ENCODE measurements at regions of chr5 and their contacts with region 1.

Region 1: DNA sequence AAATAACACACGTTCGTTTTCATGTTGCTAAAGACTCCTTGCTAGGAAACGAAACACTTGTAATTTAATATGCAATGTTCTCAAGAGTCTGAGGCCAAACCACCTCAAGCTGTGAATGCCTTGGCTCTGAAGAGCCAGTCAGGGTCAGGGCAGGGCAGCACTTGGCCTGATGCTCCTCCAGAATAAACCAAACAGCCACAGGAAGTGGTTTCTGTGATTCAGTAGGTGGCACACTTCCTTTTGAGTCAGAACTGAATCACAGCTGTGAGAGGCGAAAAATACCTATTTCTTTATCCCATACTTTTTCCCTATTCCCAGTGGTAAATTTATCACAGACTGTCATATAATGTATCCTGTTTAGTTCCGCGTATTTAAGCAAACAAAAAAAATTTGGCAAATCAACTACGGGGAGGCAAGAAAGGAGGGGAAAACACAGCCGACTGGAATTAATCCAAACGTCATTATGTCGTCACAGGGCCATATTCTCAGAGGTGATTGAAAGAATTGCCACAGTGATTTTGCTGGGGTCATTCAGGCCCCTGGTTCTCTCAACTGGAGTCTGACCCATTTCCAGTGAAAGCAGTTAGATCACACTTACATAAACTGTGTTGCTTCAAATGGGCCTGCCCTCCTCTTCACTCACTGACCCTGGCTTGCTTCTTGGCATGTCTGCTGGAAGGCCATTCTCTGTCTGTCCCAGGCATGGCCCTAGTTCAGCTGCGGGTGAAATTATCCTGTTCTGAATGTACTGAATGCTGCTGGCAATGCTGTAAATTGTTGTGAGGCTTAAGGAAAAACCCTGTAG is 71.2 kb downstream of the ARRDC3 start:
- DNase-seq: peak; percentile 82
- H3K4me3 ChIP-seq: peak overlapping the region; percentile 33
- H3K27ac ChIP-seq: peak overlapping the region; percentile 52
- H3K4me1 ChIP-seq: peaks cover 59% of the 10 kb centered on the region
- CTCF ChIP-seq: peak; percentile 59

Region 2: DNA sequence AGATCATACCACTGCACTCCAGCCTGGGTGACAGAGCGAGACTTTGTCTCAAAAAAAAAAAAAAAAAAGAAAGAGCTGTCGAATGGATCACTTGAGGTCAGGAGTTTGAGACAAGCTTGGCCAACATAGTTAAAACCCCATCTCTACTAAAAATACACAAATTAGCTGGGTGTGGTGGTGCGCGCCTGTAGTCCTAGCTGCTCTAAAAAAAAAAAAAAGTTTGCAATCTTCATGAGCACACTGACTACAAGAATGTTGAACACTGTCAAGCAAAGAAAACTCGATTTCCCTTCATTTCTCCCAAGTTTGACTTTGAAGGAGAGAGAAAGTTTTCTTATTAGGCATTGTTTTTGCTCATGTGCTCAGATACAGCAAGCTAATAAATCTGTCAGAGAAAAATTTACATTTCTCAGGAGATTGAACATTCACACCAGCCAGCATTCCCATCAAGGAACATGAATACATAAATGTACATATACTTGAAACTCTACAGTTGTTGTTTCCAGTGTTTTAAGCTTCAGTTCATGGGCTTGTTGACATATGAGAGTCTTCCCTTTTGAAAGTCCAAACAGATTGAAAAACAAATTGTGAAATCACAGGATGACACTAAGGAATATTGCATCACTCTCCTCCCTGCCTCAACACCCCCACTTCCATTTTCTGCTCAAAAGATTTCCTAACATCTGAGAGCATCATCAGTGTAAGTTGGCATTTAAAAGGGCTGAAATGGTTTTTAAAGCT is 10.6 kb before region 1 on chr5:
- CTCF ChIA-PET with region 1: no interaction called
- POLR2A ChIA-PET with region 1: interaction called, 12 read pairs
- intact Hi-C with region 1: no loop called
- DNase-seq: no peak
- H3K4me3 ChIP-seq: no peak overlapping the region
- H3K27ac ChIP-seq: no peak overlapping the region
- H3K4me1 ChIP-seq: no peaks in the 10 kb centered on the region
- CTCF ChIP-seq: no peak

Region 3: DNA sequence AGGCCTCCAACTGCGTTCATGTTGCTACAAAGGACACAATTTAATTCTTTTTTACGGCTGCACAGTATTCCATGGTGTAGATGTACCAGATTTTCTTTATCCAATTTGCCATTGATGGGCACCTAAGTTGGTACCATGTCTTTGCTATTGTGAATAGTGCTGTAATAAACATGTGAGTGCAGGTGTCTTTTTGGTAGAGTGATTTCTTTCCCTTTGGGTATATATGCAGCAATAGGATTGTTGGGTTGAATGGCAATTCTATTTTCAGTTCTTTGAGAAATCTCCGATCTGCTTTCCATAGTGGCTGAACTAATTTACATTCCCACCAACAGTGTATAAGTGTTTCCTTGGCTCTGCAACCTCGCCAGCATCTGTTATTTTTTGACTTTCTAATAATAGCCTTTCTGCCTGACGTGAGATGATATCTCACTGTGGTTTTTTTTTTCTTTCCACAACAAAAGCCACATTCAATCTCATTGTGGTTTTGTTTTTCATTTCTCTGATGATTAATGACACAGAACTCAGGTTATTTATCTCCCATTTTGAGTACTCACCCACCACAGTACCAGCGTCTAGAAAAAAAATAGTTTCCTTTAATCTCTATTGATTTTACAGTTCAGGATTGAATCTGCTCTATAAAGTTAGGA is 49.3 kb after region 1 on chr5:
- CTCF ChIA-PET with region 1: no interaction called
- POLR2A ChIA-PET with region 1: interaction called, 6 read pairs
- intact Hi-C with region 1: loop called (anchors 5 kb)
- DNase-seq: peak; percentile 30
- H3K4me3 ChIP-seq: no peak overlapping the region
- H3K27ac ChIP-seq: peak overlapping the region; percentile 45
- H3K4me1 ChIP-seq: peaks cover 18% of the 10 kb centered on the region
- CTCF ChIP-seq: no peak

Region 4: GRCh38 chr5:91787718-91788117 is 475.8 kb after region 1 on chr5:
- CTCF ChIA-PET with region 1: no interaction called
- POLR2A ChIA-PET with region 1: no interaction called
- intact Hi-C with region 1: no loop called
- DNase-seq: no peak
- H3K4me3 ChIP-seq: no peak overlapping the region
- H3K27ac ChIP-seq: no peak overlapping the region
- H3K4me1 ChIP-seq: no peaks in the 10 kb centered on the region
- CTCF ChIP-seq: no peak